RWPE1 (cell line): ENCODE measurements at regions of chr20 and their contacts with region 1.

Region 1: DNA sequence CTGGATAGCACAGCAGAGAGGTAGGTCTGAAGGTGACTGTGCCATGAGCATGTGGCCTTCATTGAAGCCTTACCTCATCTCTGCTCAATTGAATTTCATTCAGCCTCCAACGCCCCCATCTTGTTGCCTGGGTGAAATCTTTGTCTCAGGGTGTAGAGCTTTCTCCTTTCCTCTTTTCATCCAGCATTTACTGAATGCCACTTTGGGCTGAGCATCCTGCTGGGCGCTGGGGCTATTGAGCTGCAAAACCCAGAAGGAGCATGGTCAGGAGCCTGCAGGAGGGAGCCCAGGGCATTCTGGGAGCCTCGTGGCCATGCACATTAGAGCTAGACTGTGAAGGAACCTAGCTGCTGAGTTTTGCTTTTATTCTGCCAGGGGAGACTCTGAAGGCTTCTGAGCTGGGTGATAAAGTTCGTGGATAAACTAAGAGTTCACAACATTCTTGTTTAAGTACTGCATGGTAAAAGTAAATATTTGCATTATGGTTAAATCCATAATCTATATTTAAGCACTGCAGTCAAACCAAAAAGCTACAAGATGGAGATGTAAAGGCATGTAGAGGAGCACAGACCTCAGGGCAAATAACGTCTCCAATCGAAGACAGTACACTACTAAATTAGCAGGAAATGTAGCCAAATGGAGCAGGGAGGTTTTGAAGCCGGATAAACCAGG is 13.2 kb upstream of the ASXL1 start:
- DNase-seq: no peak
- H3K27ac ChIP-seq: no peak overlapping the region
- CTCF ChIP-seq: no peak

Region 2: GRCh38 chr20:32227744-32228688 is 117.0 kb before region 1 on chr20:
- CTCF ChIA-PET with region 1: no interaction called
- POLR2A ChIA-PET with region 1: no interaction called
- DNase-seq: no peak
- H3K27ac ChIP-seq: no peak overlapping the region
- CTCF ChIP-seq: no peak

Region 3: DNA sequence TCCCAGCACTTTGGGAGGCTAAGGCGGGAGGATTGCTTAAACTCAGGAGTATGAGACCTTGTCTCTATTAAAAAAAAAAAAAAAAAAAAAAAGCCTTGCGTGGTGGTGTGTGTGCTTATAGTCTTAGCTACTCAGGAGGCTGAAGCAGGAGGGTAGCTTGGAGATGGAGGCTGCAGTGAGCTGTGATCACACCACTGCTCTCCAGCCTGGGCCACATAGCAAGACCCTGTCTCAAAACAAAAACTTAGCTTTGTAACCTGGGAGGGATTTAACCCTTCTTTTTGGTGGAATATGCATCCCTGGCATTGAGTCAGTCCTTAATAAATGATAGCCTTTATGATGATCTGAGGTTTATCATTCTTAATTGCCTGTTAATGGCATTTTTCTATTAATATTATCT is 25.9 kb after region 1 on chr20:
- CTCF ChIA-PET with region 1: no interaction called
- POLR2A ChIA-PET with region 1: interaction called, 12 read pairs
- DNase-seq: no peak
- H3K27ac ChIP-seq: no peak overlapping the region
- CTCF ChIP-seq: no peak